ENCODE measurements at regions of chr1 and their contacts with region 1.

Region 1: GRCh38 chr1:150268705-150269403 is at the start of gene APH1A:
- DNase-seq: peak; percentile 78 to 96 (median 92)
- ATAC-seq: peak; percentile 90
- H3K4me3 ChIP-seq: peak within 1 kb of the TSS; percentile 80 to 95
- H3K4me3 Mint-ChIP-seq: peak within 1 kb of the TSS; percentile 90
- H3K27ac ChIP-seq: peak within 1 kb of the TSS; percentile 87 to 96
- H3K27ac Mint-ChIP-seq: peak within 1 kb of the TSS; percentile 98
- H3K4me1 ChIP-seq: peaks cover 18% of the 10 kb centered on the region
- H3K4me1 Mint-ChIP-seq: peaks cover 26% of the 10 kb centered on the region
- H3K27me3 ChIP-seq: no peaks in the 10 kb centered on the region
- H3K27me3 Mint-ChIP-seq: no peaks in the 10 kb centered on the region
- CTCF ChIP-seq: no peak
- total RNA-seq, gene APH1A: 124 to 134 TPM

Region 2: DNA sequence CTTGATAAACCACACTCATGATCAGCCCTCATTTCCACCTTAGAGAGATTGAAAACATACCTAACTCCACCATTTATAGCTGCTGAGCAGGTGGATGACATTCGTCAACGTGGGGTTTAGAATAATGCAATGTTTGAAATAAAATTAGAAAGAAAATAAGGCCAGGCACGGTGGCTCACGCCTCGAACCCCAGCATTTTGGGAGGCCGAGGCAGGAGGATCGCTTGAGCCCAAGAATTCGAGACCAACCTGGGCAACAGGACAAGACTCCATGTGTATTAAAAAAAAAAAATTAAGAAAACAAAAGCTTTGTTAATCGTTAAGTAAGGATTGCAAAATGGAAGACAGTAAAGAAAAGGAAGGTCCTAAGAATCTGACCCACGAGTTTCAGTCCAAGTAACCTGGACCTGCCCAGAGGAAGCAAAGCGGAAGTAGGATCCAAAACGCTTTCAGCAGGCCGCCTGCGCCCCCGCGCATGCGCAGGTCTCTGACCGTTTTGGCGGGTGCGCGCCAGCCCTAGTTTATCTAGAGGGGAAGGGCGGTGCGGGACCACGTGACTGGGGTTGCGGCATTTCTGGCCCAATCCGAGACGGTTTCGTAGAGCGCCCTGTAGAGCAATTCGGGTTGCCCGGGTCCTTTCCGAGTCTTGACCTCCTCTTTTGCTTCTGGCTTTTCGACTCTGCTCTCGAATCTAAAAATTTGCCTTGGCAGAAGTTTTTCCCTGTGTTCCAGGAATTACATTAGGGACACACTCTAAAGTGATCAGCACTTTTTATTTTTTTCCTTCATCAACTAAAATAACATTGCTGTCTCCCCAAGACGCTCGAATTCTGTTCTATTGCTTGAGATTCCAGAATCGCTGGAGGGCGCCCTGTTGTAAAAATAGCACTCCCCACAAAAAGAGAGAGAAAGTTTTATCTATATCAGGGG is 55.4 kb before region 1 on chr1:
- CTCF ChIA-PET with region 1: no interaction called
- POLR2A ChIA-PET with region 1: no interaction called
- intact Hi-C with region 1: loop called in 1 of 2 experiments (anchors 5 kb)
- DNase-seq: peak; percentile 82 to 96 (median 92)
- ATAC-seq: peak; percentile 99
- H3K4me3 ChIP-seq: peak overlapping the region; percentile 54 to 62
- H3K4me3 Mint-ChIP-seq: peak overlapping the region; percentile 93
- H3K27ac ChIP-seq: peak overlapping the region; percentile 70 to 74
- H3K27ac Mint-ChIP-seq: peak overlapping the region; percentile 98
- H3K4me1 ChIP-seq: peaks cover 9% of the 10 kb centered on the region
- H3K4me1 Mint-ChIP-seq: peaks cover 13% of the 10 kb centered on the region
- H3K27me3 ChIP-seq: no peaks in the 10 kb centered on the region
- H3K27me3 Mint-ChIP-seq: no peaks in the 10 kb centered on the region
- CTCF ChIP-seq: peak; percentile 54

Region 3: GRCh38 chr1:150235852-150236613 is 32.8 kb before region 1 on chr1 and contains the start of gene ANP32E:
- CTCF ChIA-PET with region 1: no interaction called
- POLR2A ChIA-PET with region 1: interaction called, 6 read pairs
- intact Hi-C with region 1: loop called (anchors 1 kb)
- DNase-seq: peak; percentile 86 to 99 (median 94)
- ATAC-seq: peak; percentile 90
- H3K4me3 ChIP-seq: peak within 1 kb of the TSS; percentile 72 to 80
- H3K4me3 Mint-ChIP-seq: no peak within 1 kb of the TSS
- H3K27ac ChIP-seq: peak within 1 kb of the TSS; percentile 89 to 96
- H3K27ac Mint-ChIP-seq: peak within 1 kb of the TSS; percentile 93
- H3K4me1 ChIP-seq: peaks cover 12% of the 10 kb centered on the region
- H3K4me1 Mint-ChIP-seq: peaks cover 18% of the 10 kb centered on the region
- H3K27me3 ChIP-seq: no peaks in the 10 kb centered on the region
- H3K27me3 Mint-ChIP-seq: no peaks in the 10 kb centered on the region
- CTCF ChIP-seq: no peak
- total RNA-seq, gene ANP32E: 30.6 to 35.0 TPM

Region 4: GRCh38 chr1:150281837-150282653 is 13.2 kb after region 1 on chr1 and contains the start of gene CIART:
- CTCF ChIA-PET with region 1: interaction called, 7 read pairs
- POLR2A ChIA-PET with region 1: interaction called, 9 read pairs
- intact Hi-C with region 1: loop called in 1 of 2 experiments (anchors 1 kb)
- DNase-seq: peak; percentile 45 to 92 (median 74)
- ATAC-seq: peak; percentile 76
- H3K4me3 ChIP-seq: peak within 1 kb of the TSS; percentile 56 to 57
- H3K4me3 Mint-ChIP-seq: peak within 1 kb of the TSS; percentile 83
- H3K27ac ChIP-seq: peak within 1 kb of the TSS; percentile 17 to 44
- H3K27ac Mint-ChIP-seq: peak within 1 kb of the TSS; percentile 89
- H3K4me1 ChIP-seq: peaks cover 24% of the 10 kb centered on the region
- H3K4me1 Mint-ChIP-seq: peaks cover 21% of the 10 kb centered on the region
- H3K27me3 ChIP-seq: no peaks in the 10 kb centered on the region
- H3K27me3 Mint-ChIP-seq: no peaks in the 10 kb centered on the region
- CTCF ChIP-seq: no peak
- total RNA-seq, gene CIART: 2.0 to 2.3 TPM

Region 5: GRCh38 chr1:150293433-150294168 is 24.7 kb after region 1 on chr1 and contains the start of gene MRPS21:
- CTCF ChIA-PET with region 1: no interaction called
- POLR2A ChIA-PET with region 1: no interaction called
- intact Hi-C with region 1: loop called (anchors 1 kb)
- DNase-seq: peak; percentile 75 to 96 (median 84)
- ATAC-seq: peak; percentile 94
- H3K4me3 ChIP-seq: peak within 1 kb of the TSS; percentile 72 to 79
- H3K4me3 Mint-ChIP-seq: peak within 1 kb of the TSS; percentile 91
- H3K27ac ChIP-seq: peak within 1 kb of the TSS; percentile 96 to 98
- H3K27ac Mint-ChIP-seq: peak within 1 kb of the TSS; percentile 94
- H3K4me1 ChIP-seq: peaks cover 15% of the 10 kb centered on the region
- H3K4me1 Mint-ChIP-seq: peaks cover 35% of the 10 kb centered on the region
- H3K27me3 ChIP-seq: no peaks in the 10 kb centered on the region
- H3K27me3 Mint-ChIP-seq: no peaks in the 10 kb centered on the region
- CTCF ChIP-seq: no peak
- total RNA-seq, gene MRPS21: 41.6 to 43.9 TPM

Region 6: DNA sequence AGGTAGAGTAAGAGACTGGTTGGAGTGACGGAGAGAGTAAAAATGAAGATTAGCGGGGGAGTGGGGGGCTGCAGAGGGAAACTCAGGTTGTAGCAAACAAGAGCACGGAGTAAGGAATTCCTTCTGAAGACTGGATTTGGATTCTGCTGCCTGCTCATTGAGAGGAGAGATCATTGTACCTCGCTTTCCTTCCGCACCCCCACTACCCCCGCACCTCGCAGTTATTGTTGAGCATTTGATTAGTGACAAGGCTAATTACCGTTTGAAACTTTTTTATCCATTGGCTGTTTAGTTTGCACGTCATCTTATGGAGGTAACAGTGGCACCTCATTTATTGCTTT is 52.9 kb after region 1 on chr1:
- CTCF ChIA-PET with region 1: no interaction called
- POLR2A ChIA-PET with region 1: interaction called, 3 read pairs
- intact Hi-C with region 1: loop called (anchors 1 kb)
- DNase-seq: peak in 2 of 9 experiments; percentile 24 to 26
- ATAC-seq: peak; percentile 24
- H3K4me3 ChIP-seq: peak overlapping the region; percentile 87 to 96
- H3K4me3 Mint-ChIP-seq: peak overlapping the region; percentile 99
- H3K27ac ChIP-seq: peak overlapping the region; percentile 92 to 93
- H3K27ac Mint-ChIP-seq: peak overlapping the region; percentile 99
- H3K4me1 ChIP-seq: peaks cover 19% of the 10 kb centered on the region
- H3K4me1 Mint-ChIP-seq: peaks cover 50% of the 10 kb centered on the region
- H3K27me3 ChIP-seq: no peaks in the 10 kb centered on the region
- H3K27me3 Mint-ChIP-seq: no peaks in the 10 kb centered on the region
- CTCF ChIP-seq: no peak

Region 7: DNA sequence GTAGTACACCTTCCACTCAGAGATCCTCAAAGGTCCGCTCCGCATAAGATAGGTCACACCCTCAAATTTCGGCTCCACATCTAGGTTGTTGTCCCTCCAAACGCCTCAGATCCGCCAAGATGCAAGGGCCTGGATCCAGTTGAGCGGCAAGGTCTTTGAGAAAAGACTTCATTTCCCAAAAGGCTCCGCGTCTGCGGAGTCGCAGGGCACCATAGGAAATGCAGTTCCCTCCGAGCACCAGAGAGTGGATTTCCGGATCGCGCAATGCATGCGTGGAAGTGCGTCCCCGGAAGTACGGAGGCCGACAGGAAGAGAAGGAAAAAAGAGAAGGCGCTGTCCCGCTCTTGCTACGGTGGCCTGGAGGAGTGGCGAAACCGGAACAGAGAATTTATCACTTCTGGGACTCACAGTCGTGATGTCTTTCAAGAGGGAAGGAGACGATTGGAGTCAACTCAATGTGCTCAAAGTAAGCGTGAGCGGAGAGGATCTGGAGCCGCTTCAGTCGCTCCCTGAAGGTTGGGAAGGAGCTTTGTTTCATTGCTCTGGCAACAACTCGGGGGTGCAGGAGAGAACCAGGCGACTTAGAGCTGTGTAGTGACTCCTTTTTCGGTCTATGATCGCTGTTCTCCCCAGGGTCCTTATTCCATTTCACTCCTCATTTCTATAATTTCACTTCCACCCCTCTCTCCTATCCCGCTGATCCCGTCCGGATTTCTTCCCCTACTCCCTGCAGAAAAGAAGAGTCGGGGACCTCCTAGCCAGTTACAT is 897.1 kb after region 1 on chr1 and contains the starts of genes LYSMD1 and SCNM1:
- CTCF ChIA-PET with region 1: no interaction called
- POLR2A ChIA-PET with region 1: no interaction called
- intact Hi-C with region 1: loop called in 1 of 2 experiments (anchors 5 kb)
- DNase-seq: peak; percentile 91 to 99 (median 95)
- ATAC-seq: peak; percentile 96
- H3K4me3 ChIP-seq: peak within 1 kb of the TSS; percentile 82 to 94
- H3K4me3 Mint-ChIP-seq: peak within 1 kb of the TSS; percentile 95
- H3K27ac ChIP-seq: peak within 1 kb of the TSS; percentile 72 to 77
- H3K27ac Mint-ChIP-seq: peak within 1 kb of the TSS; percentile 94
- H3K4me1 ChIP-seq: peaks cover 29% of the 10 kb centered on the region
- H3K4me1 Mint-ChIP-seq: peaks cover 50% of the 10 kb centered on the region
- H3K27me3 ChIP-seq: no peaks in the 10 kb centered on the region
- H3K27me3 Mint-ChIP-seq: no peaks in the 10 kb centered on the region
- CTCF ChIP-seq: no peak
- total RNA-seq, gene LYSMD1: 0.49 to 0.94 TPM
- total RNA-seq, gene SCNM1: 35.0 to 40.4 TPM

Measured in CD8-positive, alpha-beta T cell (primary cell).